ENCODE measurements at regions of chr2 and their contacts with region 1.

Region 1: GRCh38 chr2:119759451-119760236 is at the start of gene PTPN4:
- DNase-seq: peak; percentile 99
- ATAC-seq: peak; percentile 87
- H3K4me3 ChIP-seq: peak within 1 kb of the TSS; percentile 77 to 96 (median 88)
- H3K4me3 Mint-ChIP-seq: peak within 1 kb of the TSS; percentile 96
- H3K27ac ChIP-seq: peak within 1 kb of the TSS; percentile 73 to 84
- H3K27ac Mint-ChIP-seq: peak within 1 kb of the TSS; percentile 95
- H3K4me1 ChIP-seq: peaks cover 16 to 28% of the 10 kb centered on the region in 2 donors
- H3K4me1 Mint-ChIP-seq: peaks cover 42% of the 10 kb centered on the region
- H3K27me3 ChIP-seq: no peaks in the 10 kb centered on the region
- H3K27me3 Mint-ChIP-seq: no peaks in the 10 kb centered on the region
- CTCF ChIP-seq: no peak
- total RNA-seq, gene PTPN4: 54.8 and 66.4 TPM in 2 replicates

Region 2: GRCh38 chr2:118823633-118824032 is 936.0 kb before region 1 on chr2:
- CTCF ChIA-PET with region 1: no interaction called
- POLR2A ChIA-PET with region 1: no interaction called
- intact Hi-C with region 1: no loop called
- DNase-seq: no peak
- ATAC-seq: no peak
- H3K4me3 ChIP-seq: no peak overlapping the region
- H3K4me3 Mint-ChIP-seq: no peak overlapping the region
- H3K27ac ChIP-seq: no peak overlapping the region
- H3K27ac Mint-ChIP-seq: no peak overlapping the region
- H3K4me1 ChIP-seq: no peaks in the 10 kb centered on the region
- H3K4me1 Mint-ChIP-seq: no peaks in the 10 kb centered on the region
- H3K27me3 ChIP-seq: peaks cover 0 to 14% (median 2%) of the 10 kb centered on the region in 4 experiments
- H3K27me3 Mint-ChIP-seq: peaks cover 58% of the 10 kb centered on the region
- CTCF ChIP-seq: no peak

Region 3: DNA sequence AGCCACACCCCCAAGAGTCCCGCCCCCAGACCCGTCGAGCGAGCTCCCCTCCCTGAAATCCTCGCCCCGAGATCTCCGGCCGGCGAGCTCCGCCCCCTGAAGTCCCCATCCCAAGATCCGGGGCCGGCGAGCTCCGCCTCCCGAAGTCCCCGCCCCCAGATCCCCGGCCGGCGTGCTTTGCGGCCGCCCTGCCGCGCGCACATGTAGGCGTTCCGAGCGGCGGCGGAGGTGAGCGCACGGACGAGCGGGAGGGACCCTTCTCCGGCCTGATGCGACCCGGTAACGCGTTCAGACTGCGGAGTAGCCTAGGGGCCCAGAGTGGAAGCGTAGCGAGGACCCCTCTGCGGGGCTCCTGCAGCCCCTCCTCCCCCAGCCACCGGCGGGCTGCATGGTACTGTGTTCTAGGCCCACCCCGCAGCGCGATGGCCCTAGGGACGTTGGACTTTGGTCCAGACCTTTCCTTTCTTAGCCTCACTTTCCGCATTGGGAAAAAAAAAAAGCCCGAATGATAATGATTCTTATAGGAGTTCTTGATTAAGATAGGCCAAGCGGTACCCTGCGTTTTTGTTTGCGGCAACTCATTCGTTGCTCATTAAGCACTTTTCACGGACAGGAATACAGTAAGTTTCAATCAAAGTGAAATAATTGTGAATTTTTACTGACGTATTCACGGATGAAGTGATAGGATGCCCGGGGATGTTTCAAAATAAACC is 80.5 kb before region 1 on chr2 and contains the start of gene TMEM177:
- CTCF ChIA-PET with region 1: no interaction called
- POLR2A ChIA-PET with region 1: no interaction called
- intact Hi-C with region 1: loop called (anchors 1 kb)
- DNase-seq: peak; percentile 90
- ATAC-seq: peak; percentile 96
- H3K4me3 ChIP-seq: peak within 1 kb of the TSS; percentile 76 to 100 (median 93)
- H3K4me3 Mint-ChIP-seq: peak within 1 kb of the TSS; percentile 84
- H3K27ac ChIP-seq: peak within 1 kb of the TSS; percentile 50 to 60
- H3K27ac Mint-ChIP-seq: peak within 1 kb of the TSS; percentile 84
- H3K4me1 ChIP-seq: peaks cover 10 to 20% of the 10 kb centered on the region in 2 donors
- H3K4me1 Mint-ChIP-seq: peaks cover 23% of the 10 kb centered on the region
- H3K27me3 ChIP-seq: no peaks in the 10 kb centered on the region
- H3K27me3 Mint-ChIP-seq: no peaks in the 10 kb centered on the region
- CTCF ChIP-seq: no peak
- total RNA-seq, gene TMEM177: 10.6 and 12.1 TPM in 2 replicates

Region 4: DNA sequence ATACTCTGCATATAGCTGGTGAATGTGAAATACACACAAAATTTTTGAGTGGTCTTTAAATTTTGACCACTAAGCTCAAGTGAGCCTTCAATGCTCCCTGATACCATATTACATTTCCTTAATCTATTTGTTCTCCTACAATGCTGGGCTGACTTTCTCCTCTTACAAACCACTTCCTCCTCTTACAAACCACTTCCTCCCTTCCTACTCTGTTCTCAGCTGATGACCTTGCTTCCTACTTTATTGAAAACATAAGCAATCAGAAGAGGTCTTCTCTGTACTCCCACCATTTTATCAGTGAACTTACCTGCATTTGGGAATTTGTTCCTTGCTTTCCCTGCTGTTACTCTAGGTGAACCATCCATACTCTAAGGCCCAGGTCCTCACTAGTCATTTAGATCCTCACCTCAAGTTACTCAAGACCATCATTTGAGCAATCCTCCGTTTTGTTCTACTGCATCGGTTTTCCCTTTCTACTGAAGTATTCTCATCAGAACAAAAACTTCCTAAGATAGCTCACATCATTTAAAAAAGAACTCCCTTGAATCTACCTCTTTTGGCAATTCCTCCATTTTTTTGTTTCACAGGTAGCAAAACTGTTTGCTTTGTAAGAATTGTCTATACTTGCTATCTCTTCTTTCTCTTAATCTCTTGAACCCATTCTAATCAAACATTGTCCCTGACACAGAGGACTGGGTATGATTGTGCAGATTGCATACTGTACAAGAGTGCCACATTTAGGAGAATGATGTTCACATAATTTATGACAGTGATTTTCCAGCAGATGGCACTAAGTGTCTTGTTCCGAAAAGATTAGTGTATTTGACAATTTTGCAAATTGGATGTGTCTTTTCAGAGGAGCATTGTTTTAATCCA is 349.8 kb after region 1 on chr2:
- CTCF ChIA-PET with region 1: interaction called, 7 read pairs
- POLR2A ChIA-PET with region 1: no interaction called
- intact Hi-C with region 1: loop called (anchors 5 kb)
- DNase-seq: peak; percentile 48
- ATAC-seq: peak; percentile 49
- H3K4me3 ChIP-seq: peak overlapping the region in 2 of 5 experiments; percentile 20 to 21
- H3K4me3 Mint-ChIP-seq: peak overlapping the region; percentile 61
- H3K27ac ChIP-seq: peak overlapping the region in 1 of 2 donors; percentile 52
- H3K27ac Mint-ChIP-seq: peak overlapping the region; percentile 38
- H3K4me1 ChIP-seq: peaks cover 12 to 13% of the 10 kb centered on the region in 2 donors
- H3K4me1 Mint-ChIP-seq: peaks cover 17% of the 10 kb centered on the region
- H3K27me3 ChIP-seq: no peaks in the 10 kb centered on the region
- H3K27me3 Mint-ChIP-seq: no peaks in the 10 kb centered on the region
- CTCF ChIP-seq: peak; percentile 68

Region 5: GRCh38 chr2:120231974-120232635 is 472.5 kb after region 1 on chr2:
- CTCF ChIA-PET with region 1: no interaction called
- POLR2A ChIA-PET with region 1: no interaction called
- intact Hi-C with region 1: loop called (anchors 1 kb)
- DNase-seq: peak; percentile 85
- ATAC-seq: peak; percentile 91
- H3K4me3 ChIP-seq: peak overlapping the region; percentile 48 to 78 (median 73)
- H3K4me3 Mint-ChIP-seq: peak overlapping the region; percentile 91
- H3K27ac ChIP-seq: peak overlapping the region; percentile 57 to 87
- H3K27ac Mint-ChIP-seq: peak overlapping the region; percentile 92
- H3K4me1 ChIP-seq: peaks cover 26 to 37% of the 10 kb centered on the region in 2 donors
- H3K4me1 Mint-ChIP-seq: peaks cover 50% of the 10 kb centered on the region
- H3K27me3 ChIP-seq: no peaks in the 10 kb centered on the region
- H3K27me3 Mint-ChIP-seq: no peaks in the 10 kb centered on the region
- CTCF ChIP-seq: no peak